Astrocyte of the cerebellum (primary cell): ENCODE measurements at regions of chr5 and their contacts with region 1.

Region 1: DNA sequence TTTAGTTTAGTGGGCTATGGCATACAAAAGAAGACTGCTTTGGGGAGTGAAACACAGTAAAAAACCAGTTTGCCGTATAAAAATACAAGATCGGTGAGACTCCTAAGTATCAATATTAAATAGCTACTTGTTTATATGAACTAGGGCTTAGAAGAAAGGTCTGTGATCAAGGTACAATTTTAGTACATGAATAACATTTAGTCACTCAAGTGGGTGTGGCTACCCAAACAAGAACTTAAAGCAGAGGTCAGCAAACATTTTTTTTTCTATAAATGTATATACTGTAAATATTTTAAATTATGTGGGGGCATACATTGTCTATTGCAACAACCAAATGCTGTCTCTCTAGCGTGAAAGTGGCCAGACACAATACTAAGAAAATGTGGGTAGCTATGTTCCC is 1452.5 kb upstream of the NUDT12 start:
- DNase-seq: no peak
- H3K4me3 ChIP-seq: no peak overlapping the region
- CTCF ChIP-seq: no peak

Region 2: GRCh38 chr5:104937591-104937990 is 77.5 kb before region 1 on chr5:
- in situ Hi-C with region 1: loop called (anchors 5 kb)
- DNase-seq: no peak
- H3K4me3 ChIP-seq: no peak overlapping the region
- CTCF ChIP-seq: no peak

Region 3: DNA sequence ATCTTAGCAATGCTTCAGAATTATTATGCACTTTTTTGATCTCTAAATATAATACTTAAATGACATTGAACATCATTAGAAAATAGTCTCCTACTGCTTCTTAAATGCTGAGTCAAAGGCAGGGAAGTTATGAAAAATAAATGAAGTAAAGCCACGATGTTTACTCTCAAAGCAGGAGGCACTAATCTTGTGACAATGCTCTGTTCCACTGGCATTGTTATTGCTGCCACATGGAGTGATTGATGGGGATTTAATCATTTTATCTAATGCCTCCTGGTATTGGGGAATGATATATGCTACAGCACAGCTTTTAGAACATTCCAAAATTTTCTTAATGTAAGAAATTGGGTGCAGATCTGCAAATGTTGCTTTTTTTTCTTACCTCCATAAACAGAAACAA is 202.9 kb after region 1 on chr5:
- in situ Hi-C with region 1: no loop called
- DNase-seq: no peak
- H3K4me3 ChIP-seq: no peak overlapping the region
- CTCF ChIP-seq: no peak